AG04449 (cell line): ENCODE measurements at regions of chr5 and their contacts with region 1.

Region 1: GRCh38 chr5:62779010-62779422 is 200.4 kb downstream of the LRRC70 start:
- DNase-seq: peak; percentile 14
- H3K4me3 ChIP-seq: no peak overlapping the region
- CTCF ChIP-seq: peak; percentile 70

Region 2: GRCh38 chr5:62450259-62450658 is 328.8 kb before region 1 on chr5:
- CTCF ChIA-PET with region 1: interaction called, 14 read pairs
- POLR2A ChIA-PET with region 1: no interaction called
- DNase-seq: no peak
- H3K4me3 ChIP-seq: no peak overlapping the region
- CTCF ChIP-seq: no peak

Region 3: GRCh38 chr5:62465985-62466925 is 312.8 kb before region 1 on chr5:
- CTCF ChIA-PET with region 1: interaction called, 40 read pairs
- POLR2A ChIA-PET with region 1: no interaction called
- DNase-seq: no peak
- H3K4me3 ChIP-seq: no peak overlapping the region
- CTCF ChIP-seq: no peak

Region 4: GRCh38 chr5:62627121-62627520 is 151.9 kb before region 1 on chr5:
- CTCF ChIA-PET with region 1: no interaction called
- POLR2A ChIA-PET with region 1: no interaction called
- DNase-seq: no peak
- H3K4me3 ChIP-seq: no peak overlapping the region
- CTCF ChIP-seq: no peak

Region 5: GRCh38 chr5:62960781-62961180 is 181.8 kb after region 1 on chr5:
- CTCF ChIA-PET with region 1: no interaction called
- POLR2A ChIA-PET with region 1: no interaction called
- DNase-seq: no peak
- H3K4me3 ChIP-seq: no peak overlapping the region
- CTCF ChIP-seq: no peak